RWPE1 (cell line): ENCODE measurements at regions of chr7 and their contacts with region 1.

Region 1: GRCh38 chr7:24227603-24228359 is 56.2 kb upstream of the NPY start:
- DNase-seq: no peak
- H3K27ac ChIP-seq: no peak overlapping the region
- CTCF ChIP-seq: no peak

Region 2: DNA sequence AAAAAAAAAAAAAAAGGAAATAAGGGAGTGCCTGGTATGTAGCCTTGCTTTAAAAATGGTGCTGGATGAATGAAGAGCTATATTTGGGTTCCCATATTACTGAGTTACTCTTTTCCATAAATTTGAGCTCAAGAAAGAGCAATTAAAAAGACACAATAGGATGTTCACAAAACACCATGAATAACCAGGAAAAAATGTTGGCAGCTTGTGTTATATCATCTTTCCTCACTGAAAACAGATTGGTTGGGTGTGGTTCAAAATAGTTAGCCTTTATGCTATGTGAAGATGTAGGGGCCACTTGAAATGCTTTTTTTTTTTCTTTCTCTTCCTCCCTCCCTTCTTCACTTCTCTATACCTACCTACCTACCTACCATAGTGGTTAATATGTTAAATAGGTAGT is 260.8 kb before region 1 on chr7:
- CTCF ChIA-PET with region 1: interaction called, 11 read pairs
- POLR2A ChIA-PET with region 1: no interaction called
- DNase-seq: no peak
- H3K27ac ChIP-seq: no peak overlapping the region
- CTCF ChIP-seq: no peak

Region 3: DNA sequence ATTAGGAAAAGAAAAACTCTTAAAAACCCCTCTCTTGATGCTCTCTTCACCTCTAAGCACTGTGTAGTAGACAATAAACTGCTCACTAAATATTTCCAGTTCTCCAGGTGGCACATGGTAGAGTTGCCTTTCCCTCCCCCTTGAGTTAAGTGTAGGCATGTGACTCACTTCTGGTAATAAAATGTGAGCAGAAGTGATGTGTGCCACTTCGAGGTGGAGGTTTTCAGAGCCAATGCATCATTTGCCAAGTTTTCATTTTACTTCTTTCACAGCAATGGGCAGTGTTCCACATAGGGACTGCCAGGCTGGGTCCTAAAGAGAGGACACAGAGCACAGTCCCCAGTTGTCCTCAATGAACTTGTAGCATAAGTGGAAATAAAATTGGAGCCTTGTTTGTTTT is 75.4 kb before region 1 on chr7:
- CTCF ChIA-PET with region 1: no interaction called
- POLR2A ChIA-PET with region 1: no interaction called
- DNase-seq: peak; percentile 13
- H3K27ac ChIP-seq: no peak overlapping the region
- CTCF ChIP-seq: no peak

Region 4: GRCh38 chr7:24346129-24346528 is 118.3 kb after region 1 on chr7:
- CTCF ChIA-PET with region 1: no interaction called
- POLR2A ChIA-PET with region 1: no interaction called
- DNase-seq: no peak
- H3K27ac ChIP-seq: no peak overlapping the region
- CTCF ChIP-seq: no peak

Region 5: GRCh38 chr7:24653316-24654085 is 425.7 kb after region 1 on chr7:
- CTCF ChIA-PET with region 1: no interaction called
- POLR2A ChIA-PET with region 1: no interaction called
- DNase-seq: no peak
- H3K27ac ChIP-seq: no peak overlapping the region
- CTCF ChIP-seq: no peak